ENCODE measurements at regions of chr7 and their contacts with region 1.

Region 1: DNA sequence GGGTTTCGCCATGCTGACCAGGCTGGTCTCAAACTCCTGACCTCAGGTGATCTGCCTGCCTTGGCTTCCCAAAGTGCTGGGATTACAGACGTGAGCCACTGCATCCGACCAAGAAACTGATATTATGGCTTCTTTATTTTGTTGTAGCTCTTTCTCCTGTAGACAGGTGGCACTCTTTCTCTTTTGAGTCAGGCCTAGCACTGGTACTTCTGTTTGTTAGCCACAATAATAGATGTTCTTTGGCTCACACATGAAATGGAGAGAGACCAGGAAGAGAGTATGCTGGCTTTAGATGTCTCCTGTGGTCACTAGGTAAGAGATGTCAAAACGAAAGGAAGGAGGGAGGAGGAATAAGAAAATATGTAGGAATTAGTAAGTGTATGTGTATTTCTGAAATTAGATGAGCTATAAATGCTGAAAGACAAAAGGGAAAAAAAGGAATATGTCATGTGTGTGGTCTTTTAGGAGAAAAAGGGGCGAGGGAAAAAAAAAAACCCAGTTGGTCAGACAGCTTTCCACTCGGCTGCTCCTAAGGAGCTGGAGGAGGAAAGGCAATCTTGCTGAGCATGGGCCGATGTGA is 78.7 kb downstream of the CLEC2L start:
- DNase-seq: no peak
- ATAC-seq: peak in 3 of 4 donors; percentile 65 to 71 (median 68)
- H3K4me3 ChIP-seq: no peak overlapping the region
- H3K27ac ChIP-seq: no peak overlapping the region
- H3K4me1 ChIP-seq: peaks cover 0 to 32% (median 0%) of the 10 kb centered on the region in 12 donors
- H3K27me3 ChIP-seq: no peaks in the 10 kb centered on the region
- CTCF ChIP-seq: peak; percentile 30 to 64 (median 50)
- POLR2A ChIP-seq: no peak

Region 2: GRCh38 chr7:139494835-139495579 is 107.2 kb before region 1 on chr7:
- intact Hi-C with region 1: loop called in 2 of 10 experiments (anchors 10 kb)
- DNase-seq: no peak
- ATAC-seq: peak in 1 of 4 donors; percentile 20
- H3K4me3 ChIP-seq: no peak overlapping the region
- H3K27ac ChIP-seq: no peak overlapping the region
- H3K4me1 ChIP-seq: peaks cover 0 to 15% (median 0%) of the 10 kb centered on the region in 12 donors
- H3K27me3 ChIP-seq: peaks cover 0 to 8% (median 0%) of the 10 kb centered on the region in 9 donors
- CTCF ChIP-seq: no peak
- POLR2A ChIP-seq: no peak

Region 3: GRCh38 chr7:140342727-140343514 is 740.7 kb after region 1 on chr7:
- intact Hi-C with region 1: loop called in 1 of 10 experiments (anchors 10 kb)
- DNase-seq: peak in 3 of 5 donors; percentile 20 to 51 (median 46)
- ATAC-seq: peak; percentile 42 to 89 (median 82)
- H3K4me3 ChIP-seq: no peak overlapping the region
- H3K27ac ChIP-seq: no peak overlapping the region
- H3K4me1 ChIP-seq: peaks cover 0 to 12% (median 0%) of the 10 kb centered on the region in 12 donors
- H3K27me3 ChIP-seq: no peaks in the 10 kb centered on the region
- CTCF ChIP-seq: peak in 11 of 12 donors; percentile 6 to 60 (median 42)
- POLR2A ChIP-seq: no peak

Measured in heart left ventricle (tissue), 16 donors.